ENCODE measurements at regions of chr19 and their contacts with region 1.

Region 1: DNA sequence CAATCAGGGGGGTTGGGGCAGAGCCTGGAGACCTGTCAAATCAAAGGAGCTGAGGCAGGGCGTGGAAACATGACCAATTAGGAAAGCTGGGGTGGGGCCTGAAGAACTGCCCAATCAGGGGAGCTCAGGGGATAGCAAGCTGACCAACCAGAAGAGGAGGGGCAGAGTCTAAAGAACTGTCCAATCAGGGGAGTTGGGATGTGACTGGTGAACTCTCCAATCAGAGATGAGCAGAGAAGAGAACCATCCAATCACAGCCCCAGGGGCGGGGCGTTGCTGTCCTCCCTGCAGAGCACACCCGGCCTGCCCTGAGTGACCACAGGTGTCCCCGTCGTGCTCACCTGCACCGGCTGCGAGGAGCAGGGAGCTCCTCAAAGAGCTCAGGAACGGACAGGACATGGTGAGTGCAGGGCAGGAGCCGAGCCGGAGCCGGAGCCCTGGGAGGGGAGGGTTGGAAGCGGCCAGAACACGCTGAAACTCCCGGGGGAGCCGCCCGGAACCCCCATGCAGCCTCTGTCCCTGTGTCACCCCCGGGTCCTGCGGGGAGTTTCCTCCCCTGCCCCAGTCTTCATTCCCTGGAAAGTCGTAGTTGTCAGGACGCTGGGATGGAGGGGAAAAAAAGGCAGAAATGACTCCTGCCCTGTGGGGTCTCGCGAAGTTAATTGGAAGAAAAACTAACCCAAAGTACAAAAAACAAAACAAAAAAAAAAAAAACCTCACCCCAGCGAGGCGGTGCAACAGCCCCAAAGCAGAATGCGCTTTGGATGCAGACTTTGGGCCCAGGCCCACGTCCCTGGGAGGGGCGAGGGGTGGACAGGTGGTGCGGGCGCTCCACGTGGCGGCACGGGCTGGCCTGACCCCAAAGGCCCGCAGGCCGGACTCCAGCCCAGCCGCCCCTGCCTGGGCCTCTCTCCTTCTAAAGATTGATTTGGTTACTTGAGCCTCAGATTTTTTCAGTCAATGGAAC is at the start of gene ZNF556:
- DNase-seq: no peak
- ATAC-seq: no peak
- H3K4me3 ChIP-seq: no peak within 1 kb of the TSS
- H3K27ac ChIP-seq: no peak within 1 kb of the TSS
- H3K4me1 ChIP-seq: no peaks in the 10 kb centered on the region
- H3K27me3 ChIP-seq: no peaks in the 10 kb centered on the region
- CTCF ChIP-seq: no peak
- POLR2A ChIP-seq: no peak
- RAD21 ChIP-seq: no peak
- total RNA-seq, gene ZNF556: not detected in 2 replicates

Region 2: GRCh38 chr19:2648528-2648937 is 218.8 kb before region 1 on chr19:
- CTCF ChIA-PET with region 1: no interaction called
- POLR2A ChIA-PET with region 1: no interaction called
- dilution Hi-C with region 1: no loop called
- in situ Hi-C with region 1: no loop called
- intact Hi-C with region 1: loop called (anchors 2 kb)
- DNase-seq: peak; percentile 74
- ATAC-seq: peak; percentile 96
- H3K4me3 ChIP-seq: no peak overlapping the region
- H3K27ac ChIP-seq: no peak overlapping the region
- H3K4me1 ChIP-seq: no peaks in the 10 kb centered on the region
- H3K27me3 ChIP-seq: peaks cover 24% of the 10 kb centered on the region
- CTCF ChIP-seq: peak; percentile 97
- POLR2A ChIP-seq: no peak
- RAD21 ChIP-seq: peak; percentile 99

Region 3: GRCh38 chr19:2663920-2664571 is 203.3 kb before region 1 on chr19:
- CTCF ChIA-PET with region 1: no interaction called
- POLR2A ChIA-PET with region 1: no interaction called
- dilution Hi-C with region 1: no loop called
- in situ Hi-C with region 1: loop called (anchors 10 kb)
- intact Hi-C with region 1: no loop called
- DNase-seq: no peak
- ATAC-seq: no peak
- H3K4me3 ChIP-seq: no peak overlapping the region
- H3K27ac ChIP-seq: no peak overlapping the region
- H3K4me1 ChIP-seq: no peaks in the 10 kb centered on the region
- H3K27me3 ChIP-seq: peaks cover 17% of the 10 kb centered on the region
- CTCF ChIP-seq: peak; percentile 15; the same call in 1 of the 2 replicates
- POLR2A ChIP-seq: no peak
- RAD21 ChIP-seq: no peak

Measured in IMR-90 (cell line).